Caco-2 (cell line): ENCODE measurements at regions of chr3 and their contacts with region 1.

Region 1: DNA sequence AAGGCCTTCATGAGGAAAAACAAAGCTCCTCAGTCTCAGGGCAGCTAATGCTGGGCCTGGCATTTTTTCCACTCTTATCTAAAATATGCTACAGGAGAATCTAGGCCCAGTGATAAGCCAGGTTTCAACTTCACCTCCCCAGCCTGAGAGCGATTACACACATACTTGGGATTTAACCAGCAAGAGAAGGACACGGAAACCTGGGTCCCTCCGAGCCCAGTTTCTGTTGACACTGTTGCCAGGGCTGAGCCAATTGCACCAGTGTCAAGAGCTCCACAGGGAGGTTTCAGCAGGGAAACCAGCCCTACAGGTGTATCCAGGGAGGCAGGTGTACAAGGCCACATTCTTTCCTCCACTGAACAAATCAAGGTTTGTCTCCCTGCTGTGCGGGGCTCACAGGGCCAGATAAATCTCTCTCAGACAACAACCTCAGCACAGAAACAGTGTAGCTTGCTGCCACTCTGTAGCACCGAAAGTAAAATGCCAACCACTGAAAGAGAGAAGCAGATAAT is 85.4 kb downstream of the MAGI1 start:
- DNase-seq: peak; percentile 96 to 98
- H3K4me3 ChIP-seq: no peak overlapping the region
- H3K4me3 Mint-ChIP-seq: peak overlapping the region; percentile 71
- H3K27ac Mint-ChIP-seq: peak overlapping the region; percentile 100
- H3K4me1 ChIP-seq: peaks cover 89% of the 10 kb centered on the region
- H3K4me1 Mint-ChIP-seq: peaks cover 51% of the 10 kb centered on the region
- H3K27me3 ChIP-seq: no peaks in the 10 kb centered on the region
- H3K27me3 Mint-ChIP-seq: no peaks in the 10 kb centered on the region
- CTCF ChIP-seq: peak in 1 of 2 experiments; percentile 4

Region 2: GRCh38 chr3:65785065-65785645 is 168.2 kb before region 1 on chr3:
- CTCF ChIA-PET with region 1: interaction called, 4 read pairs
- POLR2A ChIA-PET with region 1: no interaction called
- intact Hi-C with region 1: loop called (anchors 1 kb)
- DNase-seq: peak in 1 of 2 experiments; percentile 46
- H3K4me3 ChIP-seq: no peak overlapping the region
- H3K4me3 Mint-ChIP-seq: no peak overlapping the region
- H3K27ac Mint-ChIP-seq: no peak overlapping the region
- H3K4me1 ChIP-seq: no peaks in the 10 kb centered on the region; the same call in 1 of the 2 replicates
- H3K4me1 Mint-ChIP-seq: peaks cover 11% of the 10 kb centered on the region
- H3K27me3 ChIP-seq: no peaks in the 10 kb centered on the region
- H3K27me3 Mint-ChIP-seq: no peaks in the 10 kb centered on the region
- CTCF ChIP-seq: peak; percentile 51 to 69

Region 3: DNA sequence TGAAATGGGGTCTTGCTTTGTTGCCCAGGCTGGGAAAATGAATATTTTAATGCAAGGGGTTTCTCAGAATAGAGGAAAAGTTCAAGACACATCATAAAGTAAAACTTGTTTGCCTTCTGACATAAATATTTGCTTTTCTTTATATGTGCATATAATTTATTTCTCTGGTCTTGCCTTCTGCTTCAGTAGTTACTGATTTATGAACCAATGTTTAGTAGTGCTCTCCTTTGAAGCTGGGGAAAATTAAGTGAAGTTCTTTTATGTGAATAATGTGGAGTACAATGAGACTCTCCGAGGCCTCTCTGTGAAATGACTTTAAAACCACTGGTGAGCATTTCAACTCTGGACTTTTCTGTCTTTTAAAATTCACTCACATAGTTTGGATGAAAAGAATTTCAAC is 29.7 kb after region 1 on chr3:
- CTCF ChIA-PET with region 1: no interaction called
- POLR2A ChIA-PET with region 1: interaction called, 8 read pairs
- intact Hi-C with region 1: loop called (anchors 1 kb)
- DNase-seq: no peak
- H3K4me3 ChIP-seq: no peak overlapping the region
- H3K4me3 Mint-ChIP-seq: no peak overlapping the region
- H3K27ac Mint-ChIP-seq: no peak overlapping the region
- H3K4me1 ChIP-seq: no peaks in the 10 kb centered on the region
- H3K4me1 Mint-ChIP-seq: peaks cover 7% of the 10 kb centered on the region
- H3K27me3 ChIP-seq: no peaks in the 10 kb centered on the region
- H3K27me3 Mint-ChIP-seq: no peaks in the 10 kb centered on the region
- CTCF ChIP-seq: no peak

Region 4: GRCh38 chr3:66038726-66039589 is 85.6 kb after region 1 on chr3 and contains the start of gene MAGI1:
- CTCF ChIA-PET with region 1: interaction called, 6 read pairs
- POLR2A ChIA-PET with region 1: interaction called, 14 read pairs
- intact Hi-C with region 1: loop called (anchors 1 kb)
- DNase-seq: peak; percentile 94 to 95
- H3K4me3 ChIP-seq: peak within 1 kb of the TSS; percentile 70
- H3K4me3 Mint-ChIP-seq: peak within 1 kb of the TSS; percentile 95
- H3K27ac Mint-ChIP-seq: peak within 1 kb of the TSS; percentile 94
- H3K4me1 ChIP-seq: peaks cover 4% of the 10 kb centered on the region; the same call in 1 of the 2 replicates
- H3K4me1 Mint-ChIP-seq: peaks cover 13% of the 10 kb centered on the region
- H3K27me3 ChIP-seq: no peaks in the 10 kb centered on the region
- H3K27me3 Mint-ChIP-seq: no peaks in the 10 kb centered on the region
- CTCF ChIP-seq: no peak
- total RNA-seq, gene MAGI1: 63.6 and 64.9 TPM in 2 replicates

Region 5: GRCh38 chr3:66220602-66221377 is 267.4 kb after region 1 on chr3 and contains the start of gene SLC25A26:
- CTCF ChIA-PET with region 1: no interaction called
- POLR2A ChIA-PET with region 1: no interaction called
- intact Hi-C with region 1: loop called (anchors 5 kb)
- DNase-seq: peak; percentile 95 to 97
- H3K4me3 ChIP-seq: peak within 1 kb of the TSS; percentile 72
- H3K4me3 Mint-ChIP-seq: peak within 1 kb of the TSS; percentile 85
- H3K27ac Mint-ChIP-seq: peak within 1 kb of the TSS; percentile 81
- H3K4me1 ChIP-seq: no peaks in the 10 kb centered on the region; the same call in 1 of the 2 replicates
- H3K4me1 Mint-ChIP-seq: peaks cover 17% of the 10 kb centered on the region
- H3K27me3 ChIP-seq: no peaks in the 10 kb centered on the region
- H3K27me3 Mint-ChIP-seq: no peaks in the 10 kb centered on the region
- CTCF ChIP-seq: no peak
- total RNA-seq, gene SLC25A26: 25.4 and 26.3 TPM in 2 replicates